H1 (cell line): ENCODE measurements at regions of chr1 and their contacts with region 1.

Region 1: GRCh38 chr1:28510665-28511440 is 5.0 kb downstream of the RCC1 start:
- DNase-seq: no peak
- H3K4me3 ChIP-seq: no peak overlapping the region
- H3K27ac ChIP-seq: peak overlapping the region; percentile 95
- H3K4me1 ChIP-seq: peaks cover 5 to 17% (median 9%) of the 10 kb centered on the region in 4 experiments; a peak in 5 of 7 replicates
- H3K27me3 ChIP-seq: no peaks in the 10 kb centered on the region
- CTCF ChIP-seq: no peak
- EP300 ChIP-seq: no peak
- POLR2A ChIP-seq: peak; percentile 68 to 100
- RAD21 ChIP-seq: no peak

Region 2: DNA sequence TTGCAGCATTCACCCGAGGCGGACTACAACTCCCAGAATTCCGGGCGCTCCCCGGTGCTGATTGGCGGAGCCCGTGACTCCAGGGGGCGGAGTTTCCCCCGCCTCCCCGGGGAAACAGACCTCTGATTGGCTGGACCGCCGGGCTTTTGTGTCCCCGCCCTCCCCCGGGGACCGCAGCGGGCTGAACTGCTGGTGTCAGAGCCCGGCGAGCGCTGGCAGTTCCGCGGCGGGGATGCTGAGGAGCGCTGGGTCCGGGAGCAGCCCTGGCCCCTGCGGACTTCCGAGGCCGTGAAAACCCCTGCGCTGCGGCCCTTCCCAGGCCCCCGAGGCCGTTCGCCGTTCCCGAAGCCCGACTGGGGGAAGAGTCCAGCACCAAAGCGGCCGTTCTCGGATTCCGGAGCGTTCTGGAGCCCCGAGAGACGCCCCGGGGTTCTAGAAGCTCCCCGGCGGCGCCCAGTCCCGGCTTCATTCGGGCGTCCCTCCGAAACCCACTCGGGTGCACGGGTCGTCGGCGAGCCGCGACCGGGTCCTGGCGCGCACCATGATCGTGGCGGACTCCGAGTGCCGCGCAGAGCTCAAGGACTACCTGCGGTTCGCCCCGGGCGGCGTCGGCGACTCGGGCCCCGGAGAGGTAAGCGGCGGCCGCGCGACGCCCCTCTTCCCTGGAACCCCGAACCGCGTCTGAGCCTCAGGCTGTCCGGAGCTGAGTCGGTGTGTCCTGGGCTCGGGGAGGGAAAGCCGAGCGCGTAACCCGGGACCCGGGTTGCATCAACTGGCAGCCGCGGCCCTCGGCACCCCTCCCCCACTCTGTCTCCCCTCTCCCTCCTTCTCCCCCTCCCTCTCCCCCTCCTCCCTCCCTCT is 251.3 kb before region 1 on chr1 and contains the start of gene SESN2:
- CTCF ChIA-PET with region 1: no interaction called
- POLR2A ChIA-PET with region 1: interaction called, 14 read pairs
- DNase-seq: peak; percentile 94 to 99
- H3K4me3 ChIP-seq: peak within 1 kb of the TSS; percentile 73 to 97 (median 88)
- H3K27ac ChIP-seq: peak within 1 kb of the TSS; percentile 67; the same call in 1 of the 2 replicates
- H3K4me1 ChIP-seq: peaks cover 3 to 17% (median 11%) of the 10 kb centered on the region in 4 experiments; a peak in 5 of 7 replicates
- H3K27me3 ChIP-seq: no peaks in the 10 kb centered on the region
- CTCF ChIP-seq: no peak
- EP300 ChIP-seq: no peak
- POLR2A ChIP-seq: peak; percentile 79 to 95
- RAD21 ChIP-seq: no peak
- total RNA-seq, gene SESN2: 22.6 and 25.1 TPM in 2 replicates

Region 3: GRCh38 chr1:28369371-28370238 is 141.2 kb before region 1 on chr1 and contains the start of gene PHACTR4:
- CTCF ChIA-PET with region 1: no interaction called
- POLR2A ChIA-PET with region 1: interaction called, 58 read pairs
- DNase-seq: peak; percentile 90 to 96
- H3K4me3 ChIP-seq: peak within 1 kb of the TSS; percentile 74 to 86 (median 79)
- H3K27ac ChIP-seq: peak within 1 kb of the TSS; percentile 82
- H3K4me1 ChIP-seq: no peaks in the 10 kb centered on the region; a peak in 1 of 7 replicates
- H3K27me3 ChIP-seq: no peaks in the 10 kb centered on the region
- CTCF ChIP-seq: no peak
- EP300 ChIP-seq: no peak
- POLR2A ChIP-seq: peak; percentile 84 to 93
- RAD21 ChIP-seq: no peak
- total RNA-seq, gene PHACTR4: 54.1 and 57.8 TPM in 2 replicates

Region 4: DNA sequence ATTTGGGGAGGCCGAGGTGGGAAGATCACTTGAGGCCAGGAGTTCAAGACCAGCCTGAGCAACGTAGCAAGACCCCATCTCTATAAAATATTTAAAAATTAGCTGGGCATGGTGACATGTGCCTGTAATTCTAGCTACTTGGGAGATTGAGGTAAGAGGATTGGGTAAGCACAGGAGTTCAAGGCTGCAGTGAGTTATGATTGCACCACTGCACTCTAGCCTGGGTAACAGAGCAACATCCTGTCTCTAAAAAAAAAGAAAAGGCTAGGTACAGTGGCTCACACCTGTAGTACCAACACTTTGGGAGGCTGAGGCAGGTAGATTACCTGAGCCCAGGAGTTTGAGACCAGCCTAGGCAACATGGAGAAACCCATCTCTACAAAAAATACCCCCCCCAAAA is 40.7 kb before region 1 on chr1:
- CTCF ChIA-PET with region 1: no interaction called
- POLR2A ChIA-PET with region 1: interaction called, 17 read pairs
- DNase-seq: no peak
- H3K4me3 ChIP-seq: no peak overlapping the region
- H3K27ac ChIP-seq: no peak overlapping the region
- H3K4me1 ChIP-seq: no peaks in the 10 kb centered on the region
- H3K27me3 ChIP-seq: no peaks in the 10 kb centered on the region
- CTCF ChIP-seq: no peak
- EP300 ChIP-seq: no peak
- POLR2A ChIP-seq: no peak
- RAD21 ChIP-seq: no peak

Region 5: GRCh38 chr1:28535180-28535579 is 24.3 kb after region 1 on chr1:
- CTCF ChIA-PET with region 1: no interaction called
- POLR2A ChIA-PET with region 1: interaction called, 16 read pairs
- DNase-seq: no peak
- H3K4me3 ChIP-seq: no peak overlapping the region
- H3K27ac ChIP-seq: no peak overlapping the region
- H3K4me1 ChIP-seq: no peaks in the 10 kb centered on the region
- H3K27me3 ChIP-seq: no peaks in the 10 kb centered on the region; a peak in 1 of 7 replicates
- CTCF ChIP-seq: no peak
- EP300 ChIP-seq: no peak
- POLR2A ChIP-seq: no peak
- RAD21 ChIP-seq: no peak

Region 6: DNA sequence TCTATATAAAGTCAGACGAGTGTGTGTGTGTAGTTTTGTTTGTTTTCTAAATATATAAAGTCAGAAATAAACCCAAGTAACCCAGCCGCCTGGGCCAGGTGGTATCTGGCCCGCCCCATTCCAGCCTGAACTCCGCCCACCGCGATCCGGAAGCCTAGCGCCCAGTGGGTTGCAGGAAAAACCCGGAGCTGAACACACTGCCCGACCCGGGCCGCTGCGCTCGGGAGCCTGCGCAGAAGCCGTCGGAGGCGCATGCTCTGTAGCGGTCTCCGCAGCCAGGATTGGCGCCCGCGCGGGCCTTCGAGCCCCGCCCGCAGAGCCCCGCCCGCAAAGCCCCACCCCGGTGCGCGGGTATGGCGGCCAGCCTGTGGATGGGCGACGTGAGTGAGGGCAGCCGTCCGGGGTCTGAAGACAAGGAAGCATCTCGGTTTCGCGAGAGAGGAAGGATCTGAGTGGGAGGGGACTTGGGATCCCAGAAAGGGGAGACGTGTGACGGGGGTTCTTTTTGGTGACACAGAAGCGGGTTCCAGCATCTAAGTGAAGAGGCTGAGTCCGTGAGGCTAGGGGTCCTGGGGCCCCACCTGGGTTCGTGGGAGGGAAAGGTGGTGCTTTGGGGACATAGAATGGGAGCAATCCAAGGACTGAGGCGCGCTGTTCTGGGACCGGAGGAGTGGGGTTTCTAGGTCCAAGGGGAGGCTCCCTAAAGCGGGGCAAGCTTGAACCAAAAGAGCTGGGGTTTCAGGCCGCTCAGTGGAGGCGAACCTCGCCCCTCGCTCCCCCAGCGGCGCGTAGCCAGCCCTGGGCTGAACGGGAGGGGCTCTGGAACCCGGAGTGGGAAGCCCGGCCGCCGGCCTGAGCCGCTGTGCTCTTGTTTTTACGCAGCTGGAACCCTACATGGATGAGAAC is 42.2 kb after region 1 on chr1 and contains the start of gene TRNAU1AP:
- CTCF ChIA-PET with region 1: no interaction called
- POLR2A ChIA-PET with region 1: interaction called, 89 read pairs
- DNase-seq: peak; percentile 82 to 98
- H3K4me3 ChIP-seq: peak within 1 kb of the TSS; percentile 72 to 96 (median 90)
- H3K27ac ChIP-seq: peak within 1 kb of the TSS; percentile 49
- H3K4me1 ChIP-seq: no peaks in the 10 kb centered on the region
- H3K27me3 ChIP-seq: no peaks in the 10 kb centered on the region
- CTCF ChIP-seq: no peak
- EP300 ChIP-seq: peak in 1 of 2 experiments; percentile 65; a peak in 1 of 3 replicates
- POLR2A ChIP-seq: no peak; a peak in 1 of 3 replicates
- RAD21 ChIP-seq: peak; percentile 2 to 18; a peak in 1 of 4 replicates
- total RNA-seq, gene TRNAU1AP: 30.8 and 35.2 TPM in 2 replicates

Region 7: DNA sequence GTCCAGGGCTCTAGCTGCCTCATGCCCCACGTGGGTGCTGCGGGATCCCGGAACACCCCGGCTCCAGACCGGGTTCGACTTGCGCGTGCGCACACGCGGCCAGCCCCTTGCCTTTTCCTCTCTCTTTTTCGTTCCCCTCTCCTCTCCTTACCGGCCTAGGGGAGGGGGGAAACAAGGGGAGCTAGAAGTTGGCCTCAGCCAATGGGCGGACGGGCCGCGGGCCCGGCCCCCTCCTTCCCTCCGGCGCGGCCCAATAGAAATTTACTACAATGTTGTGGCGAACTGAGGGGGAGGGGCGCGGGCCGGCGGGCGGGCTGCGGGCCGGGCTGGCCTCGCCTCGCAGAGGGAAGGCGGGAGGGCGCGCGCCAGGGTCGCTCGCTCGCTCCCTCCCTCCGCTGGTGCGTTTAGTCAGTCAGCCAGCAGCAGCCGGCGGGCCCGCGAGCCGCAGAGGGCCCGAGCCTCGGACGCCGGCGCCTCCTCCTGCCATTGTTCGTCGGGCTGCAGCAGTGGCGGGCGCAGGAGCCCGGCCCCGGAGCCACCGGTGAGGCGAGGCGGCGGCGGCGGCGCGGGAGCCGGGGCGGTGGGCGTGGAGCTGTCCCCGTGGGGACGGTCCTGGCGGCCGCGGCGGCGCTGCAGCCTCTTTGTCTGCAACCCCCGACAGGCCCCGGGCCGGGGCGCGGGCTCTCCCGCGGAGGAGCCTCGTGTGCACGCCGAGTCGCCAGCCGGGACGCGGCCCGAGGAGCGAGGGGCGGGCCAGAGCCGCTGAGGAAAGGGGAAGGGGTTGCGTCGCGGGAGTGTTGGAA is 403.6 kb after region 1 on chr1 and contains the start of gene EPB41:
- CTCF ChIA-PET with region 1: no interaction called
- POLR2A ChIA-PET with region 1: no interaction called
- DNase-seq: peak; percentile 96
- H3K4me3 ChIP-seq: peak within 1 kb of the TSS; percentile 78 to 95 (median 94)
- H3K27ac ChIP-seq: peak within 1 kb of the TSS; percentile 74
- H3K4me1 ChIP-seq: peaks cover 4 to 15% (median 7%) of the 10 kb centered on the region in 4 experiments; a peak in 5 of 7 replicates
- H3K27me3 ChIP-seq: no peaks in the 10 kb centered on the region
- CTCF ChIP-seq: no peak
- EP300 ChIP-seq: no peak
- POLR2A ChIP-seq: peak; percentile 78 to 90
- RAD21 ChIP-seq: no peak
- total RNA-seq, gene EPB41: 106 and 109 TPM in 2 replicates